Heart right ventricle (tissue), 16 donors: ENCODE measurements at regions of chr21 and their contacts with region 1.

Region 1: DNA sequence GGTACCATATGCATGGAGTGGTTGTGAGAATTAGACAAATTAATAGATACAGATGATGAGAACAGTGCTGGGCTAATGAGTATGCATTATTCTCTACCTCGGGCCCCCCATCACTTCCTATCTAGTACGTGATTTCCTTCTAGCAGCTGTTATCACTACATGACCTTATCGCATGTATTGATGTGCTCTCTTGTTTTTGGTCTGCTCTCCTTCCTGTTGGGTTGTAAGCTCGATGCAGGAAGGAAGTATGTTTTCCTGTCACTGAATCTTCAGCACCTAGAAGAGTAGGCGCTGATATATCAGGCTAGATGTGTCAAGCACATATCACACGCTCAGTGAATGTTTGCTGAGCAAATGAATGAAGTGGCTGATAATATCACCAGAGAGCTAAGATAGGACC is 43.9 kb upstream of the IFNAR2 start:
- DNase-seq: no peak
- ATAC-seq: peak in 1 of 8 donors; percentile 22
- H3K4me3 ChIP-seq: no peak overlapping the region
- H3K27ac ChIP-seq: peak overlapping the region in 1 of 10 donors; percentile 66
- H3K4me1 ChIP-seq: peaks cover 0 to 24% (median 6%) of the 10 kb centered on the region in 9 donors
- H3K27me3 ChIP-seq: peaks cover 0 to 23% (median 0%) of the 10 kb centered on the region in 7 donors
- CTCF ChIP-seq: no peak

Region 2: DNA sequence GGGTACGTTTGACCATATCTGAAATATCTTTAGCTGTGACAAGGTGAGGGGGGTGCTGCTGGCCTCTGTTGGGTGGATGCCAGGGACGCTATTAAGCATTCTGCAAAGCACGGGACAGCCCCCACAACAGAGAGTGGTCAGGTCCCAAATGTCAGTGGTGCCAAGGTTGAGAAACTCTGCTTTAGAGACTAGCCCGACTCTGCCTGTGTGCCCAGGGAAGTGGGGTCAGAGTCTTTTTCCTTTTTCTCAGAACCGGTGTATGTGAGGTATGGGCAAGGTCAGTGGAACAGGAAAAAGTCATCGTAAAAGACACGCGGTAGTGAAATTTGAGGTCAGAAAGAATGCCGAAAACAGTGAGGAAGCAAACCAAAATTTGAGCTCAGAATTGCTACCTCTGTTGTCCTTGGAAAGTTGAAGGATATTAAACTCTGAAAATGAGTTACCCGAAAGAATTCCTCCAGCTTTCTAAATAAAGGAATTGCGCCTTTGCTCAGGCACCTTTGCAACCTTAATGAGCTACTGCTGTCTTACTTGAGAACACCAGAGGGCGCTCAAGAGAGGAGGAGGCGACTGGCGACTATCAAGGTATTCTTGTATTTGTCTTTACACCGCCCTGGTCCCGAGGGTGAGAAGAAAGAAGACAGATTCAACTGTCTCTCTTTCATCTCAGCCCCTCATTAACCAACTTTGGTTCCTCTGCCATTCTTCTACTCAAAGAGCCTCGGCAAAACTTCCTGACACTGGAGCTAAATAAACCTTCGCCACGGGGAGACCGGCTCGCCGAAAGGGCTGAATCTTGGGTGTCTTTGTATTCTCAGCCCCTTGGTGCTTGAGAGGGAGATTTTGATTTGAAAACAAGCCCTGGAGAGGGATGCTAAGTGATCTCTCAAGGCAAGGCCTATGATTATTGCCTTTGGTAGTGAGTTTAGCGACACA is 245.5 kb before region 1 on chr21:
- intact Hi-C with region 1: loop called in 2 of 10 experiments (anchors 10 kb)
- DNase-seq: peak in 1 of 2 donors; percentile 40
- ATAC-seq: peak in 4 of 8 donors; percentile 51 to 62 (median 56)
- H3K4me3 ChIP-seq: no peak overlapping the region
- H3K27ac ChIP-seq: no peak overlapping the region
- H3K4me1 ChIP-seq: peaks cover 0 to 5% (median 0%) of the 10 kb centered on the region in 9 donors
- H3K27me3 ChIP-seq: peaks cover 0 to 5% (median 0%) of the 10 kb centered on the region in 7 donors
- CTCF ChIP-seq: peak; percentile 52 to 85 (median 79)

Region 3: DNA sequence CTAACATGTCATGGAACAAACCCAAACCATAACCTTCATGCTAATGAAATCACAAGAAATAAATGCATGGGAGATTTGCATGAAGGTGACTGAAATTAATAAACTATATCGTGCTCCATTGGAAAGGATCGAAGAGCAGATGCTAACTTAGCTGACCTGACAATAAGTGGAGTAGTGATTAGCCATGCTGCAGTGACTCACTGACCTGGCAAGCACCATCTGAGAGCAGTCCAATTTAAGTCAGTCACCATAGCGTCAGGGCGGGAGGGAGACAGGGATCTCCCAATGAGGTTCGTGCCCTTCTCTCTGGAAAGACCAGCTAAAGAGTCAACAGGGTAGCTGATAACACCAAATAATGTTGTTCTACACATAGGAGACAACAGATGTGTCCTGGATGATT is 138.6 kb before region 1 on chr21:
- intact Hi-C with region 1: no loop called
- DNase-seq: no peak
- ATAC-seq: peak in 1 of 8 donors; percentile 90
- H3K4me3 ChIP-seq: no peak overlapping the region
- H3K27ac ChIP-seq: no peak overlapping the region
- H3K4me1 ChIP-seq: peaks cover 0 to 6% (median 0%) of the 10 kb centered on the region in 9 donors
- H3K27me3 ChIP-seq: peaks cover 0 to 88% (median 35%) of the 10 kb centered on the region in 7 donors
- CTCF ChIP-seq: no peak